ENCODE measurements at regions of chr2 and their contacts with region 1.

Region 1: DNA sequence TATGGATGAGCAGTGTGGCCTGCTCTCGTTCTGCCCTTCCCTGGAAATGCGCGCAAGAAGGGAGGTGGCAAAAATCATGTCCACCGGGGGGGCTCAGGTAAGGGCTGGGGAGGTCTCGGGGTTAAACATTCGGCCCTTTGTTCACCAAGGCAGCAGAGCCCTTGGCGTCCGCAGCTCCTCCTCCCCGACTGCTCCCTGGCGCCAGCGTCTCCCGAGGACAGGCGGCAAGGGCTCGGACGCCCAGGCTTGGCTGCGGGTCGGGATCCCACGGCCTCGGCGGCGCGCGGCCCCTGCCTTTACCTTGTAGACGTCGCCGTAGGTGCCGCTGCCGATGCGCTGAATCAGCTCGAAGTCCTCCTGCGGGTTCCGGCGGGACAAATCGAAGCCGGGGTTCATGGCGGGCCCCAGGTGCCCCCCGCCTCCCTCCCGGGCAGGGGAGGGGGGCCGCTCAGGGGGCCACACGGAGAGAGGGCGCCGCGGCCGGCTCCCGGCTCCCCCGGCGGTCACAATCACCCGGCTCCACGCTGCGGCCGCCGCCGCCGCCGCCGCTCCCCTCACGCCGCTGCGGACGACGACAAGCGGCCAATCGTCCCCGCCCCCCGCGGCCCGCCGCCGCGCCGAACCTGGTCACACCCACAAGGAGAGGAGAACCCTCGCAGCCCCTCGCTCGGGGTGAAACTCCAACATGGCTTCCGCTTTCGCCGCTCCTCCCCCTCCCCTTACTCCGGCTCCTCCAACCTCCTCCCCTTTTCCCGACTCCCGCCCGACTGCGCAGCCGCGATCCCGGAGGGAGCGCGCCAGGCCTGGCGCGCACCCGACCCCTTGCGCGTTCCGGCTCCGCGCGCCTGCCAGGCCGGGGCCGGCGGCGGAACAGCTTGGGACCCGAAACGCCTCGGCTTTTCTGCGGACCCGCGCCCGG is at the start of gene MAP4K3:
- DNase-seq: peak; percentile 94
- ATAC-seq: peak; percentile 93
- total RNA-seq, gene MAP4K3: 32.3 TPM

Region 2: DNA sequence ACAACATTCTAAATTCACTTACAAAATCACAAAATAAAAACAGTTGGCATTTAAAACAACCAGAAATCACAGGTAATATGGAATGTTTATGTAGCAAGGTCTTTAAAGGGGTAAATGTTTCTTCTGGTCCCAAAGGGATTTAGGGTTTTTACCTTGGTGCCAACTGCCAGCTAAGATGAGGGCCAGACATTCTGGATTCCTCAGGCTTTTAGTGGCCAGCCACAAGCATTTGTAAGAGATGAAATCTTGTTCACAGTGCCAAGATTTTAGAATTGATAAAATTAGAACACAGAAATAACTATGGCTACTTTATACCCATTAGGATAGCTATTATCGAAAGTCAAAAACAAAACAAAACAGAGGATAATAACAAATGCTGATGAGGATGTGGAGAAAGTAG is 132.7 kb before region 1 on chr2:
- intact Hi-C with region 1: loop called (anchors 10 kb)
- DNase-seq: no peak
- ATAC-seq: no peak

Region 3: GRCh38 chr2:39356922-39357639 is 79.8 kb before region 1 on chr2:
- intact Hi-C with region 1: no loop called
- DNase-seq: no peak
- ATAC-seq: peak; percentile 81

Region 4: GRCh38 chr2:39379643-39380524 is 57.0 kb before region 1 on chr2:
- intact Hi-C with region 1: loop called (anchors 1 kb)
- DNase-seq: no peak
- ATAC-seq: peak; percentile 78

Region 5: DNA sequence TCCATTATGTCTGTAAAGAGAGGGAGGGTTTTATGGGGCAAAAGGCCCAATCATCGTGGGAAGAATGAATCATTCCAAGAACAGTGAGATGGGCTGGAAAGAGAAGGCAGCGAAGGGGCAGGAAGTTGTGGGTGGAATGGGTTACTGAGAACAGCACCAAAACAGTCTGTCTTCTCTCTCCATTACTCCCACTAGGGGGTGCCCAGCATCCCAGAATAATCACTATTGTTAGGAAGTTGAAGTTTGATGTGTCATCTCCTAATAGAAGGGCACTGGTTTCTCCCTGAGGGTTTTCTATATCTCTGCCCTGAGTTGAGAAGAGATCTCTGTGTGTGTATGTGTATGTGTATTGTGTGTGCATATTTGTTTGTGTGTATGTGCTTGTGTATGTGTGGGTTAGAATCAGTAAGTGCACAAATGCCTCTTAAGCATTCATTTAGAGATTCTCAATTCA is 76.8 kb after region 1 on chr2:
- intact Hi-C with region 1: loop called (anchors 5 kb)
- DNase-seq: no peak
- ATAC-seq: peak; percentile 46

Region 6: GRCh38 chr2:39593439-39594393 is 156.9 kb after region 1 on chr2:
- intact Hi-C with region 1: loop called (anchors 10 kb)
- DNase-seq: no peak
- ATAC-seq: peak; percentile 73

Region 7: GRCh38 chr2:39696838-39697237 is 260.0 kb after region 1 on chr2:
- intact Hi-C with region 1: loop called (anchors 5 kb)
- DNase-seq: no peak
- ATAC-seq: peak; percentile 54

Region 8: GRCh38 chr2:39728941-39729351 is 292.1 kb after region 1 on chr2:
- intact Hi-C with region 1: loop called (anchors 5 kb)
- DNase-seq: peak; percentile 55
- ATAC-seq: no peak

Region 9: GRCh38 chr2:40168041-40168442 is 731.2 kb after region 1 on chr2:
- intact Hi-C with region 1: no loop called
- DNase-seq: no peak
- ATAC-seq: no peak

Measured in Right ventricle myocardium inferior (tissue), 1 donor.